ENCODE measurements at regions of chr12 and their contacts with region 1.

Region 1: GRCh38 chr12:120588948-120589930 is 8.0 kb upstream of the POP5 start:
- DNase-seq: peak; percentile 49 to 89 (median 80)
- H3K4me3 ChIP-seq: no peak overlapping the region
- H3K27ac ChIP-seq: peak overlapping the region in 58 of 59 donors; percentile 48 to 95 (median 83)
- H3K27me3 ChIP-seq: no peaks in the 10 kb centered on the region
- CTCF ChIP-seq: no peak

Region 2: DNA sequence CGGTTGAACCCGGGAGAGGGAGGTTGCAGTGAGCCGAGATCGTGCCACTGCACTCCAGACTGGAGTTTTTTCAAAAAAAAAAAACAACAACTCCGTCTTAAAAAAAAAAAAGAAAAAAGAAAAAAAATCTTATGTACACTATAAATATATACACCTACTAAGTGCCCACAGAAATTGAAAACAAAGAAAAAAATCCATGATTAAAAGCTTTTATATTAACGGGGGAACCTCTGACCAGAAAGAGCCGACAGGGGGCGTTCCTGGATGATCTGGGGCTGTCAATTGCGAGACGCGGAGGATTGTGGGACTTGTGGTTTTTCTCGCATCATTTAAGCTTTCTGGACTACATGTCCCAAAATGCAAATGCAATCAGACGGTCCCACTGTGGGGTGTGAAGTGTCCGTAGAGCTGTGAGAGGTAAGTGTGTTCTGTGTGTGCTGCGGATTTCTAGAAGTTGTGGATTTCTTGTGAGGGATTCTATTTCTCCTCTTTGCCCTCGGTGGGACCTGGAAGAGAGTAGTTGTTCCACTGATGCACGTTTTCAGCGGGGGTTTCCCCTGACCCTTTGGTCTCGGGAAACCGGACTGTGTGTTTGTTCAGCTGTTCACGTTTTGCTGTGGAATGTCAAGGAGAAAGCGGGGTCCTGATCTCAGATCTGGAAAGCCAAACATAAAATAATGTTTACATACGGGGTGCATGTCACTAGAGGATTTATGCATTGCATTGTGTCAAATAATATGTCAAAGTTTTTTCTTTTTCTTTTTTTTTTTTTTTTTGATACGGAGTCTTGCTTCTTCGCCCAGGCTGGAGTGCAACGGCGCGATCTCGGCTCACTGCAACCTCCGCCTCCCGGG is 287.1 kb before region 1 on chr12 and contains the start of gene SIRT4:
- intact Hi-C with region 1: no loop called
- DNase-seq: peak; percentile 72 to 97 (median 92)
- H3K4me3 ChIP-seq: peak within 1 kb of the TSS; percentile 42 to 93 (median 77)
- H3K27ac ChIP-seq: peak within 1 kb of the TSS in 55 of 59 donors; percentile 18 to 95 (median 83)
- H3K27me3 ChIP-seq: no peaks in the 10 kb centered on the region
- CTCF ChIP-seq: peak; percentile 86 to 99 (median 93)
- total RNA-seq, gene SIRT4: 1.9 to 15.5 (median 6.3) TPM

Region 3: DNA sequence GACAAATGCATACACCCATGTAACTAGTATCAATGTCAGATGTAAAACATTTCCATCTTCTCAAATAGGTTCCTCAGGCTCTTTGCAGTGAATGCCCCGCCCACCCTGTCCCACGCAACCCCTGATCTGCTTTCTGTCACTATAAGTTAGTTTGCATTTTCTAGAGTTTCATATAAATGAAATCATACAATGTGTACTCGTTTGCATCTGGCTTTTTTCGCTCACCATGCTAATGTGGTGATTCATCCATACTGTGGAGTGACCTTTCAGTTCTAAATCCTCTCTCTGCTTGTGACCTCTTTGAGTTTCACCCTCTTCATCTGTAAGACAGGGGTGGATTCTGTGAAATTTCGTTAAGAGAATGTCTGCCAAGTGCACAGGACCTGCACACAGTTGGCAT is 189.7 kb before region 1 on chr12:
- intact Hi-C with region 1: no loop called
- DNase-seq: no peak
- H3K4me3 ChIP-seq: no peak overlapping the region
- H3K27ac ChIP-seq: no peak overlapping the region
- H3K27me3 ChIP-seq: peaks cover 0 to 34% (median 12%) of the 10 kb centered on the region in 45 donors
- CTCF ChIP-seq: no peak

Region 4: GRCh38 chr12:120466560-120467315 is 122.5 kb before region 1 on chr12:
- intact Hi-C with region 1: no loop called
- DNase-seq: peak in 4 of 10 donors; percentile 32 to 47 (median 42)
- H3K4me3 ChIP-seq: peak overlapping the region in 2 of 59 donors; percentile 5 to 16
- H3K27ac ChIP-seq: peak overlapping the region in 8 of 59 donors; percentile 1 to 47 (median 18)
- H3K27me3 ChIP-seq: no peaks in the 10 kb centered on the region
- CTCF ChIP-seq: peak in 54 of 56 donors; percentile 19 to 67 (median 52)

Region 5: DNA sequence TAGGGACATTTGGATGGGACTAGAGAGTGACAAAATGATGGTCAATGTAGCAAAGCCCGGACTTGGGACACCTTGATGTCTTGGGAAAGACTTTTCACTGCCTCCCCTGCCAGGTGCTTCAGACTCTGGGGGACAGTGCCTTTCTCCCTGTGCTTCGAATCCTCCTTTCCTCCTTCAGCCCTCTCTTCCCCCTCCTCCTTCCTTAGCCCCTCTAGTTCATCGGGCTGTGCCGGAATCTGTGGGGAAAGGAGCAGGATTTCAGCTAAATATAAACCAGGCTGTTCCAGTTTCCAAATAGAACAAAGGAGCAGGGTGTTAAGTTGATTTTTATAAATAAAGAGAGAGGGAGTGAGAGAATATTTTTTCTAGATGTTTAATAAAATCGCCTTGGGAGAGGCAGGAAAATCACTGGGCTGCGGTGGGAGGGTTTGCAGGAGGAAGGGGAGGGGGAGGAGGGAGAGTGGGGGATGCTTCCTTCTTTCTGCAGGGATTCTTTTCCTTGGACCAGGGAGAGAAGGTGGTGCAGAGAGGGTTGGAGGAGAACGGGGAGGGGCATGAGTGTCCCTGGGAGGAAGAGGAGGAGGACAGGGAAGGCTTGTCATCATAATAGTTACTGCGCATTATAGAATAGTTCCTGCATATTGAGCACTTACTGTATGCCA is 29.8 kb after region 1 on chr12:
- intact Hi-C with region 1: loop called in 1 of 2 experiments (anchors 1 kb)
- DNase-seq: peak in 4 of 10 donors; percentile 19 to 64 (median 58)
- H3K4me3 ChIP-seq: no peak overlapping the region
- H3K27ac ChIP-seq: peak overlapping the region in 51 of 59 donors; percentile 23 to 86 (median 64)
- H3K27me3 ChIP-seq: peaks cover 0 to 10% (median 0%) of the 10 kb centered on the region in 45 donors
- CTCF ChIP-seq: no peak

Region 6: GRCh38 chr12:120783197-120783596 is 194.0 kb after region 1 on chr12:
- intact Hi-C with region 1: no loop called
- DNase-seq: no peak
- H3K4me3 ChIP-seq: no peak overlapping the region
- H3K27ac ChIP-seq: peak overlapping the region in 14 of 59 donors; percentile 0 to 47 (median 17)
- H3K27me3 ChIP-seq: no peaks in the 10 kb centered on the region
- CTCF ChIP-seq: no peak